Esophagus muscularis mucosa (tissue), 4 donors: ENCODE measurements at regions of chr16 and their contacts with region 1.

Region 1: GRCh38 chr16:17578921-17579874 is 108.4 kb upstream of the XYLT1 start:
- DNase-seq: no peak
- H3K4me3 ChIP-seq: no peak overlapping the region
- H3K27ac ChIP-seq: no peak overlapping the region
- H3K4me1 ChIP-seq: peaks cover 0 to 9% (median 0%) of the 10 kb centered on the region in 4 donors
- H3K27me3 ChIP-seq: no peaks in the 10 kb centered on the region
- CTCF ChIP-seq: peak in 2 of 3 experiments; percentile 80 to 83
- EP300 ChIP-seq: no peak
- POLR2A ChIP-seq: no peak

Region 2: DNA sequence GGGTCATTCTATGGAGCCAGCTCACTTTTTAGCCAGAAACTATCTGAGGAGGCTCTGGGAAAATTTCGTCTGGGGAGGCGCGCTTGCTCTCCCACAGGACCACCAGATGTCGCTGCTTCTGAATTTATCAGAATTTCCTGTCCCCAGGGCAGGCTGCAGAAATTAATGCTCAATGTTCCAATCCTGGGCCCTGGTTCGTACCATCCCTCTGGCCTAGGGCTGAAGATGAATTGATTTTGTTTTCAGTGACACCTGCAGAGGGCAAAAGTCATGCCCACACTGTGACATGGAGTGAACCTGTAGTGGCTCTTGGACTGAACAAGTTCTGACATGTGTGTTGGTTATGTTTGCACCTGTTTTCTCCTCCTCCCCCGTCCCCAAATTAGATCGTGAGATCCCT is 717.7 kb before region 1 on chr16:
- intact Hi-C with region 1: loop called (anchors 5 kb)
- DNase-seq: no peak
- H3K4me3 ChIP-seq: no peak overlapping the region
- H3K27ac ChIP-seq: no peak overlapping the region
- H3K4me1 ChIP-seq: peaks cover 0 to 18% (median 0%) of the 10 kb centered on the region in 4 donors
- H3K27me3 ChIP-seq: peaks cover 0 to 33% (median 0%) of the 10 kb centered on the region in 4 donors
- CTCF ChIP-seq: peak; percentile 58 to 79 (median 72)
- EP300 ChIP-seq: no peak
- POLR2A ChIP-seq: no peak

Region 3: DNA sequence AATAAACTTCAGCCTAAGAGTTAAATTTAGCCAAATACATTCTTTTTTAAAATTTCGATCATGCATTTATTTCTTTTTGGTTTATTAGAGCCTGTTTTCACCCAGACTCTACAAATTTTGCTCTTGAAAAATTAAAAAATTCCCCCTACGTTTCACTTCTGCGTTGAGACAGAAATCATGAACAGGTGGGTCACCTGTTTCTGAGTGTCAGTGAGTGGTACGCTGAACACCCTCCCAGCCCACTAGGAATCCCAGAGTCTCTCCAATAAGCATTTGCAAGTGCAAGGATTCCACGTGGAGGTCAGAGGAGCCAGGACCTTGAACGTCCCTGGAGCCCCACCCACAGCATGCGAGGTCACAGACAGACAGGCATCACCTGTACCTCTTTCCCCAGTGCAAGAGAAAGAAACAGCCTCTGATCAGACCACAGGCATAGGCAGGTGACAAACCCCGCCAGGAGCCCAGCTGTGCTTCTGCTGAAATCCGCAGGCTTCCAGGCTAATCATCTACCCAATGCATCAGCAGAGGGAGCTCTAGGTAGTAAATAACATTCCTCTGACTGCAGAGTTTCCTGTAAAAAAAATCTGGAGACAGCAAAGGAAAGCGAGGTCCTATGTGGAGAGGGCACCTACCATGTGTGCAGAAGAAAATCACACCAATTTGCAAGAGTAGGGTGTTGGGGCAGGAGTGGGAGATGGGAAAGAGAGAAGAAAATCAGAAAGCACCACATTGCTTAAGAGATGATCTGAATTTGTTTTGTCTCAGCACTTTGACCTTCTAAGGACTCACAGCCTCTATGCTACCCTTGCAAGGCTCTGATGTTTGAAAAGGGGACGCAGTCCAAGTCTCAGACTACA is 102.6 kb before region 1 on chr16:
- intact Hi-C with region 1: loop called (anchors 2 kb)
- DNase-seq: no peak
- H3K4me3 ChIP-seq: no peak overlapping the region
- H3K27ac ChIP-seq: no peak overlapping the region
- H3K4me1 ChIP-seq: peaks cover 0 to 12% (median 8%) of the 10 kb centered on the region in 4 donors
- H3K27me3 ChIP-seq: peaks cover 0 to 9% (median 0%) of the 10 kb centered on the region in 4 donors
- CTCF ChIP-seq: peak; percentile 59 to 70 (median 65)
- EP300 ChIP-seq: no peak
- POLR2A ChIP-seq: no peak

Region 4: DNA sequence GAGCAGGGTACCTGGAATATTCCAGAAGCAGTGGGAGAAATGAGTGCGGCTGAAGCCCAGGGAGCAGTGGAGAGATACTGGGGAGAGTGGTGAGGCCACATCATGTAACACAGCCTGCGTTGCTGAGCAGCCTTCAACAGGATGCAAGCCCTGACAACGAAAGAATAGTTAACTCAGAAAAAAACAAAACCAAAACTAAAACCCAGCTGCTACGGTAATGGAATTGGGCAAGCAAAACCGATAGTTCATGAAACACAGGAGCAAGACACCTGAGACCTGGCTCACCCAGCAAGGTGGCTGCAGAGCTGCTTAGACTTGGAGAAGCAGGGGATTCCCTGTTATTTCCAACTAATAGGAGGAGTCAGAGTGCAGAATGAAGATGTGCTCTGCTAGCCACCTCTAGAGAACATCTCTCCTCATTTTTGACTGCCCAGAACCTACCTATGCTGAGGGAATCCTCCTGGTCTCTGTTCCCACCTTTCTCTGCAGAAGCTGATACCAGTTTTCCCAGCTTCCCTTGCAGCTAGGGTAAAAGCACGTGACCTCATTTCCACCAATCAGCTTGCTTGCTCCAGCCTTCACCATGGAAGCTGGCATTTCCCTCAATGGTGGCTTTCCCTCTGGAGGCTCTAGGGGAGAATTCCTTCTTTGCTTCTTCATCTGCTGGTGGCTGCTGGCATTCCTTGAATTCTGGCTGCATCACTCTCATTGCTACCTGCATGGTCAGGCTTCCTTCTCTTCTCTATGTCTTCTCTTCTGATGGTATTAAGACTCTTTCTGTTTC is 49.0 kb before region 1 on chr16:
- intact Hi-C with region 1: no loop called
- DNase-seq: no peak
- H3K4me3 ChIP-seq: no peak overlapping the region
- H3K27ac ChIP-seq: no peak overlapping the region
- H3K4me1 ChIP-seq: no peaks in the 10 kb centered on the region
- H3K27me3 ChIP-seq: no peaks in the 10 kb centered on the region
- CTCF ChIP-seq: no peak
- EP300 ChIP-seq: no peak
- POLR2A ChIP-seq: no peak